AG04450 (cell line): ENCODE measurements at regions of chr2 and their contacts with region 1.

Region 1: DNA sequence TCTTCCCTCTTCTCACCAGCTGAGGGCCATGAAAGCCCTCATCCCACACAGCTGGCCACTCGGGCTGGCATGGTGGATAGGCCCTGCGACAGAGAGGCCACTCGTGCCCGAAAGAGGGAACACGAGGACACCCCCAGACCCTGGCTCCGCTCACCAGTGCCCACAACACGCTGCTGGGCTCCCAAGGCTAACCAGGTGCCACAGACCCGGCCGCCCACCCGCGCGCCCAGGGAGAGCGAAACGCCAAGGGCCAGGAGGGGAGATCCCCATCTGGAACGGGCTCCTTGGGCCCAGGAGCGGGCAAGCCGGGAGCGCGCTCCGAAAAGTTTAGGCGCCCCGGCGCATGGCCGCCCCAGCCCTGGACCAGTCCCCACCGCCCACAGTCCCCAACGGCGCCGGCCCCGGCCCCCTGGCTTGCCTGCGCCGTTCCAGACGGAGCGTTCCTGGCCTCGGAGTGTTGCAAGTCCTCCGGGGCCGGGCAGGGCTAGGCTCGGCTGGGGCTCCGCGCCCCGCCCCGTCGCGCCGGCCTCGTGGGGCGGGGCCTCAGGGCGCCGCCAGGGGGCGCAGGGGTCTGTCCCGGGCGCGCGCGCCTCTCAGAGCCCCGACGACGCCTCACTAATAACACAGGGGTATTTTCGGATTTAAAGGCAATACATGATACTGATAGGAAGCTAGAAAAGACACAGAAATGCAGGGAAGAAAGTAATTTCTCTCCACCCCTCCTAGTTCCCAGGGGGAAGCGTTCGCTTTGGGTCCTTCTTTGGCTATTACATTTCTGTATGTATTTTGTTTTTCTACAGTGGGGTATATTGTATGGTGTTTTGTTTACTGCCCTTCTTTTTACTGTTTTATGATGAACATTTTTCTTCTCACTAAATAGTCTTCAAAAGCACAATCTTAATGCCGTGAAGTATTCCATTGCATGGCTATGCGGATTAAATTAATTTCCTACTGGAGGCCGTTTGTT is at the start of gene TMBIM1:
- DNase-seq: no peak
- H3K4me3 ChIP-seq: peak within 1 kb of the TSS; percentile 81
- H3K27ac ChIP-seq: peak within 1 kb of the TSS; percentile 57
- H3K27me3 ChIP-seq: no peaks in the 10 kb centered on the region
- CTCF ChIP-seq: peak; percentile 58
- polyA plus RNA-seq, gene TMBIM1: 91.4 and 105 TPM in 2 replicates

Region 2: DNA sequence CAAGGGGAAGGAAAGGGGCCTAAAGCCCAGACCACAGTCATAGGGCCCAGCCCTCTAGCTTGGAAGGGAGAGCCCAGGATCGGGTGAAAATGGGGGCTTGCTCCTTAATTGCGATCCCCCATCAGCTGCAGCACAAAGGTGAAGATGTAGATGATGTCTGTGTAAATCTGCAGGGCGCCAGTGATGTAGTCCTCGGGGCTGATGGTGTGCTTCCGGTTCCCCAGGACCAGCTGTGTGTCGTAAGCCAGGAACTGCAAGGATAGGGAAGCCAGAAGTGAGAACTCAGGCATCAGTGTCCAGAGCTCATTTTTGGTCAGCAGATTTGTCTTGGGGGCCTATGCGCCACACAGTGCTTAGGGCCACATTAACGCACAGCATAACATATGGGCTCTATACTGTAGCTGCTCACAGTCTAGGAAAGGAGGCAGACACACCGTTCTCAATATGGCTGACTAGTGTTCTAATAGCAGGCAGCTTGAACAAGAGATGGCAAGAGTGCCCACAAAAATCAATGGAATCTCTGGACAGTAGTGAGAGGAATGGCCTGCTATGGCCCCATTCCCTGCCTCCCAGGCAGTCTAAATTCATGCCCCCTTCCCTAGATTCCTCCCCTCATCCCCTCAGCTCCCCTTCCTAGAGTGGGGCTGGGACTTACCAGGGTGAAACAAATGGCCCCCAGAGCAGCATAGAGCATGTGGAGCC is 16.8 kb before region 1 on chr2:
- CTCF ChIA-PET with region 1: interaction called, 39 read pairs
- POLR2A ChIA-PET with region 1: interaction called, 17 read pairs
- DNase-seq: no peak
- H3K4me3 ChIP-seq: no peak overlapping the region
- H3K27ac ChIP-seq: no peak overlapping the region
- H3K27me3 ChIP-seq: no peaks in the 10 kb centered on the region
- CTCF ChIP-seq: no peak

Region 3: GRCh38 chr2:218357236-218358159 is 65.2 kb after region 1 on chr2:
- CTCF ChIA-PET with region 1: interaction called, 19 read pairs
- POLR2A ChIA-PET with region 1: no interaction called
- DNase-seq: no peak
- H3K4me3 ChIP-seq: no peak overlapping the region
- H3K27ac ChIP-seq: no peak overlapping the region
- H3K27me3 ChIP-seq: no peaks in the 10 kb centered on the region
- CTCF ChIP-seq: no peak

Region 4: GRCh38 chr2:218395797-218396687 is 103.7 kb after region 1 on chr2:
- CTCF ChIA-PET with region 1: interaction called, 64 read pairs
- POLR2A ChIA-PET with region 1: interaction called, 7 read pairs
- DNase-seq: peak; percentile 94
- H3K4me3 ChIP-seq: peak overlapping the region; percentile 76
- H3K27ac ChIP-seq: peak overlapping the region; percentile 98
- H3K27me3 ChIP-seq: no peaks in the 10 kb centered on the region
- CTCF ChIP-seq: peak; percentile 75

Region 5: GRCh38 chr2:218788529-218789255 is 496.4 kb after region 1 on chr2:
- CTCF ChIA-PET with region 1: no interaction called
- POLR2A ChIA-PET with region 1: no interaction called
- DNase-seq: no peak
- H3K4me3 ChIP-seq: no peak overlapping the region
- H3K27ac ChIP-seq: no peak overlapping the region
- H3K27me3 ChIP-seq: no peaks in the 10 kb centered on the region
- CTCF ChIP-seq: no peak